ENCODE measurements at regions of chr11 and their contacts with region 1.

Region 1: GRCh38 chr11:71977743-71978418 is 20.8 kb upstream of the IL18BP start:
- DNase-seq: peak; percentile 25 to 69 (median 55)
- ATAC-seq: peak; percentile 62
- H3K4me3 ChIP-seq: no peak overlapping the region
- H3K4me3 Mint-ChIP-seq: no peak overlapping the region
- H3K27ac ChIP-seq: no peak overlapping the region
- H3K27ac Mint-ChIP-seq: no peak overlapping the region
- H3K4me1 ChIP-seq: no peaks in the 10 kb centered on the region
- H3K4me1 Mint-ChIP-seq: no peaks in the 10 kb centered on the region
- H3K27me3 ChIP-seq: no peaks in the 10 kb centered on the region
- H3K27me3 Mint-ChIP-seq: no peaks in the 10 kb centered on the region
- CTCF ChIP-seq: peak; percentile 78

Region 2: GRCh38 chr11:71928737-71929452 is 49.0 kb before region 1 on chr11 and contains the start of gene RNF121:
- CTCF ChIA-PET with region 1: interaction called, 10 read pairs
- POLR2A ChIA-PET with region 1: no interaction called
- intact Hi-C with region 1: no loop called
- DNase-seq: peak; percentile 94 to 99 (median 97)
- ATAC-seq: peak; percentile 86
- H3K4me3 ChIP-seq: peak within 1 kb of the TSS; percentile 67 to 98
- H3K4me3 Mint-ChIP-seq: peak within 1 kb of the TSS; percentile 100
- H3K27ac ChIP-seq: peak within 1 kb of the TSS; percentile 90 to 96
- H3K27ac Mint-ChIP-seq: peak within 1 kb of the TSS; percentile 99
- H3K4me1 ChIP-seq: peaks cover 22% of the 10 kb centered on the region
- H3K4me1 Mint-ChIP-seq: peaks cover 57% of the 10 kb centered on the region
- H3K27me3 ChIP-seq: no peaks in the 10 kb centered on the region
- H3K27me3 Mint-ChIP-seq: no peaks in the 10 kb centered on the region
- CTCF ChIP-seq: no peak
- total RNA-seq, gene RNF121: 8.5 to 9.0 TPM

Region 3: GRCh38 chr11:71999362-71999761 is 21.5 kb after region 1 on chr11:
- CTCF ChIA-PET with region 1: interaction called, 12 read pairs
- POLR2A ChIA-PET with region 1: no interaction called
- intact Hi-C with region 1: no loop called
- DNase-seq: no peak
- ATAC-seq: no peak
- H3K4me3 ChIP-seq: peak overlapping the region; percentile 51 to 53
- H3K4me3 Mint-ChIP-seq: peak overlapping the region; percentile 87
- H3K27ac ChIP-seq: peak overlapping the region; percentile 47 to 86
- H3K27ac Mint-ChIP-seq: peak overlapping the region; percentile 95
- H3K4me1 ChIP-seq: peaks cover 24% of the 10 kb centered on the region
- H3K4me1 Mint-ChIP-seq: peaks cover 31% of the 10 kb centered on the region
- H3K27me3 ChIP-seq: no peaks in the 10 kb centered on the region
- H3K27me3 Mint-ChIP-seq: no peaks in the 10 kb centered on the region
- CTCF ChIP-seq: no peak

Region 4: DNA sequence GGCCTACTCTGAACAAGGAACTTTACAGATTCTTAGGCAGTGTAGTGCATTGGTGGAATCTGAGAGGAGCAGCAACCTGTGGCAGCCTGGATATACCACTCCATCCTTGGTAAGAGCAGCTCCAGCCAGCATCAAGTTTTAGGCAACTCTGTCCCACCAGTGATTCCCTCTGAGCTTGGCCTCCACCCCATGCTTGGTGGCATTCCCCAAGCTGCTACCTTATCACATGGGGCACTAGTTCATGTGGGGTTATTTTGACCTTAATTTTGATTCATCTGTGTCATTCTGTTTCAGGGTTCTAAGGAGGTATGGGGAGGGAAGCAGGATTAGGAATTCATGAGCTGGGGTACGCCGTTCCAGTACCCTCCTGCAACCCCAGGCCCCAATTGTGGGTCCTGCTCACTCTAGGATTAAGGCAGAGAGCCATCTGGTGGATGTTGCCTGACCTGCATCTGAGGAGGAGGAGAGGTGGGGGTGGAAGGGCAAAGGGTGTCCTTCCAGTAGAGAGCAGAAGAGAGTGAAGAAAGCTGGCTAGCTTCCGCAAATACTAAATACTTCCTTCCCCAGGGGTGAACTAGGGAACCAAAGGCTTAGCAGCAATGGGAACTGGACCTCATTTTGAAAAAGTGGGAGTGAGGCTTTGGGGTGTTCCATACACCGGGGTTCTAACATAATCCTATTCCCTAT is 113.3 kb after region 1 on chr11:
- CTCF ChIA-PET with region 1: interaction called, 47 read pairs
- POLR2A ChIA-PET with region 1: no interaction called
- intact Hi-C with region 1: loop called (anchors 1 to 2 kb)
- DNase-seq: peak; percentile 50 to 80 (median 73)
- ATAC-seq: peak; percentile 99
- H3K4me3 ChIP-seq: no peak overlapping the region
- H3K4me3 Mint-ChIP-seq: no peak overlapping the region
- H3K27ac ChIP-seq: no peak overlapping the region
- H3K27ac Mint-ChIP-seq: peak overlapping the region; percentile 70
- H3K4me1 ChIP-seq: no peaks in the 10 kb centered on the region
- H3K4me1 Mint-ChIP-seq: peaks cover 12% of the 10 kb centered on the region
- H3K27me3 ChIP-seq: no peaks in the 10 kb centered on the region
- H3K27me3 Mint-ChIP-seq: no peaks in the 10 kb centered on the region
- CTCF ChIP-seq: peak; percentile 74

Region 5: DNA sequence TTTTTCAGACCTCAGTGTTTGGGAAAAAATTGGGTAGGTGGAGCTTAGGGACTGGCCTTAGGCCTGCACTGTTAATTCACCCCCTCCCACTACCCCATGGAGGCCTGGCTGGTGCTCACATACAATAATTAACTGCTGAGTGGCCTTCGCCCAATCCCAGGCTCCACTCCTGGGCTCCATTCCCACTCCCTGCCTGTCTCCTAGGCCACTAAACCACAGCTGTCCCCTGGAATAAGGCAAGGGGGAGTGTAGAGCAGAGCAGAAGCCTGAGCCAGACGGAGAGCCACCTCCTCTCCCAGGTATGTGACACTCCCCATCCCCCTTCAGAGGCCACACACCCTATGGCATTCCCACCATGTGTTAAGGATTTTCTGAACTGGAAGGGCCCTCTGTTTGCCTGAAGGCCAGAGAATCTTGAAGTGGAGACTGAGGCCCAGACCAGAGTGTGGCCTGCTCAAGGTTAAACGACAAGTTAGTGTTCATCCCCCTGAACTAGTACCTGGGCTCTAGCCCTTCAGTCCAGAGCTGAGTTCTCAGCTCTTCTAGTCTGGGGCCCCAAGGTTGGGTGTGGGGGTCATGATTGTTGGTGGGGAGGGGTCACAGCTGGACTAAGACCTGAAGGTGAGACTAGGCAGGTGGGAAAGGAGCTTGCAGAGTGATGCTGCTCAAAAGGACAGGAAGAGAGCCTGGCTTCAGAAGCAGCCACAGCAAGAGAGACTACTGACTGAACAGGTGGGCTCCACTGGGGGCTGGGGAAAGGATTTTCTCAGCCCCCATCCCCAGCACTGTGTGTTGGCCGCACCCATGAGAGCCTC is 211.8 kb after region 1 on chr11:
- CTCF ChIA-PET with region 1: interaction called, 22 read pairs
- POLR2A ChIA-PET with region 1: no interaction called
- intact Hi-C with region 1: no loop called
- DNase-seq: no peak
- ATAC-seq: no peak
- H3K4me3 ChIP-seq: no peak overlapping the region
- H3K4me3 Mint-ChIP-seq: no peak overlapping the region
- H3K27ac ChIP-seq: no peak overlapping the region
- H3K27ac Mint-ChIP-seq: no peak overlapping the region
- H3K4me1 ChIP-seq: no peaks in the 10 kb centered on the region
- H3K4me1 Mint-ChIP-seq: no peaks in the 10 kb centered on the region
- H3K27me3 ChIP-seq: no peaks in the 10 kb centered on the region
- H3K27me3 Mint-ChIP-seq: no peaks in the 10 kb centered on the region
- CTCF ChIP-seq: no peak

Region 6: DNA sequence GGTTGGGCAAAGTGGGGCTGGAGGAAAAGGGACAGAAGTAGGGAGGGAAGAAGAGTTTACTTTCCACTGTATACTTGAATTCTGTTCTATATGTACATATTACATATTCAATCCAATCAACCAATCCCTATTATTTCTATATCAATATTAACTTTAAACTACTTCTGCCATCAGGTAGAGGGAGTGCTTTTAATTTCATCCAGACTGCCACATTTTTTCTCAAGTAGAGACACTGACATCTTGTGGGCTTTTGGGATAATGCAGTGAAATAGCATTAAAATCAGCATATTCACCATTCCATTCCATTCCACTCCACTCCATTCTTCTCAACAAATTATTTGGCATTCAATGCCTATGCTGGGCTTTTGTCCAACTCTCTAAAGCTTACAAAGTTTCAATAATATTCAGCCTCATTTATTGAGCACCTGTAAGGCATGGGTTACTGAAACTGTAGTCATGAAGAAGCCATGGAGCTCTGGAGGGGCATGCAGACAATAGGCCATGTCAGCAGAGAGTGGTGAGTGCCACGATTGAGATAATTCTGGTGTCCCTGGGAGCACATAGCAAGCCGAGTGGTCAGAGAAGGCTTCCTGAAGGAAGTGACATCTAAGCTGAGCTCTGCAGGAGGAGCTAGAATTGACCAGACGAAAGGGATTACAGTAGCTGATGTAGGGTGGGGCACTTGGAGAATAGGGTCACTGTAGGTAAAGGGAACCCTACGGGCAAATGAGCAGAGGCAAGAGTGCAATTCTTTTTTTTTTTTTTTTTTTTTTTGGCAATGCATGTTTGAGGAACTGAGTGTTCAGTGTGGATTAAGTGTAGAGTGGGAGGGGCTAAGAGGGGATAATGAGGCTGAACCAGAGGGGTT is 469.3 kb after region 1 on chr11:
- CTCF ChIA-PET with region 1: no interaction called
- POLR2A ChIA-PET with region 1: no interaction called
- intact Hi-C with region 1: loop called in 1 of 2 experiments (anchors 5 kb)
- DNase-seq: peak in 2 of 9 experiments; percentile 57 to 68
- ATAC-seq: peak; percentile 88
- H3K4me3 ChIP-seq: no peak overlapping the region
- H3K4me3 Mint-ChIP-seq: no peak overlapping the region
- H3K27ac ChIP-seq: no peak overlapping the region
- H3K27ac Mint-ChIP-seq: no peak overlapping the region
- H3K4me1 ChIP-seq: no peaks in the 10 kb centered on the region
- H3K4me1 Mint-ChIP-seq: no peaks in the 10 kb centered on the region
- H3K27me3 ChIP-seq: no peaks in the 10 kb centered on the region
- H3K27me3 Mint-ChIP-seq: peaks cover 13% of the 10 kb centered on the region
- CTCF ChIP-seq: peak; percentile 68

Measured in CD8-positive, alpha-beta T cell (primary cell).